ENCODE measurements at regions of chr4 and their contacts with region 1.

Region 1: GRCh38 chr4:58732973-58733372 is 1622.8 kb upstream of the IGFBP7 start:
- DNase-seq: peak; percentile 58
- ATAC-seq: peak; percentile 71
- H3K4me3 ChIP-seq: no peak overlapping the region
- H3K27ac ChIP-seq: no peak overlapping the region
- H3K4me1 ChIP-seq: no peaks in the 10 kb centered on the region
- H3K27me3 ChIP-seq: no peaks in the 10 kb centered on the region
- CTCF ChIP-seq: peak; percentile 83

Region 2: DNA sequence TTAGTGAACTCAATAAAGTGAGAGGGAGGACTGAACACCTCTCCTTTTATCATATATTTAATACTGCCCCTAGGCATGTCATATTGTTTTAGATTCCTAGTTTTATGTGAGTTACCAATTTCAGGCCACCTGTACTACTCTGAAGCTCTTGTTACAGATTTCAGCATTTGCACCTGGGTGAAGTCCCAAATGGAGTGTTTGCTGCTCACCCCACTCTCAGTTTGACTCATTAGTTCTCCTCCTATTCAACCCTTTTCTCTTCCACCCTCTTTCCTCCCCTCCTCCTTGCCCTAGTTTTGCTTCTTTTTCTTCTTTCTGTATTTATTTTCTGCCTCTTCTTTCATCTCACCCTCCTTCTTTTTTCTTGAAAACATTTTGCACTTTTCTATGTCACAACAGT is 229.5 kb after region 1 on chr4:
- CTCF ChIA-PET with region 1: no interaction called
- POLR2A ChIA-PET with region 1: no interaction called
- intact Hi-C with region 1: loop called (anchors 1 kb)
- DNase-seq: no peak
- ATAC-seq: no peak
- H3K4me3 ChIP-seq: no peak overlapping the region
- H3K27ac ChIP-seq: no peak overlapping the region
- H3K4me1 ChIP-seq: no peaks in the 10 kb centered on the region
- H3K27me3 ChIP-seq: no peaks in the 10 kb centered on the region
- CTCF ChIP-seq: no peak

Region 3: GRCh38 chr4:59057804-59058203 is 324.8 kb after region 1 on chr4:
- CTCF ChIA-PET with region 1: no interaction called
- POLR2A ChIA-PET with region 1: no interaction called
- intact Hi-C with region 1: loop called (anchors 5 kb)
- DNase-seq: peak; percentile 89
- ATAC-seq: peak; percentile 98
- H3K4me3 ChIP-seq: no peak overlapping the region
- H3K27ac ChIP-seq: no peak overlapping the region
- H3K4me1 ChIP-seq: peaks cover 16% of the 10 kb centered on the region
- H3K27me3 ChIP-seq: no peaks in the 10 kb centered on the region
- CTCF ChIP-seq: no peak

Region 4: DNA sequence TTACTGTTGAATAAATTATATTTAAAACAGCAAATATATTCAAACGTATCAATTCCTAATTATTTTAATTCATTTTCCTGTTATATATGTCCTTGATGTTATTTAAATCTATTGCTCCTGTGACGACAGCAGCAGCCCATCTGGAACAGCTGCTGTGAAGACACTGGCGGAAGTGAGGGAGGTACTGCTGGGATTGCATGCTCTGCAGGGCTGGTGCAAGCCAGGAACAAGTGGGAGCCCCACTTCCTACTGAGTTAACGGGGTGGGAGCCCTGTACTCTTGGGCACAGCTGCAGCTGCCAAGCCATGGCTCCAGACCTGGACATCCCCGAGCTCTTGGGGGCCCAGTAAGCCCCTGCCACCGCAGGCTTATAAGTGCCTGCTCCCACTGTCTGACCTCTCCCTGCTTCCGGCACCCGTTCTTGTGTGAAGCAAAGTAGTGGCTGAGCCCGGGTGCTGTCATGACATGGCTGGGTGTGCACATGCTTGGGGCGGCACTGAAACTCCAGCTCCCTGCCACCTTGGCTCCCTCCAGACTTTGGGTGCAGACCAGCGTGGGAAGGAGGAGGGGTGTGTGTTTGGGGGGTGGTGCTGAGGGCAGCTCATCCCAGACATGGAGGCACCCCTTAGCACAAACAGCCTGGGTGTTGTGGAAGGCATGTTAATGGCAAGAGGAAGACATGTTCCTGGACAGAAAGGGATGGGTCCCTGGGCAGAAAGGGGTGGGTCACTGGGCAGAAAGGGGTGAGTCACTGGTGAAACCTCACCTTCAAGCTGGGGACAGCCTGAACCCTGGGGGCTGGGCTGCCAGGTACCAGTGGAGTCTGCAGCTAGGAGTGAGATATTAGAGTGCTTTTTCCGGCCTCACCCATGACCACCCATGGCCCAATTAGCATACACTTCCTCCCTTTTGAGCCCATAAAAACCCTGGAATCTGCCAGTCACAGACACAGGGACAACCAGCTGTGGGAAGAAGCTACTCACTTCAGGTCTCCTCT is 358.5 kb after region 1 on chr4:
- CTCF ChIA-PET with region 1: no interaction called
- POLR2A ChIA-PET with region 1: no interaction called
- intact Hi-C with region 1: loop called (anchors 10 kb)
- DNase-seq: peak; percentile 21
- ATAC-seq: peak; percentile 38
- H3K4me3 ChIP-seq: no peak overlapping the region
- H3K27ac ChIP-seq: no peak overlapping the region
- H3K4me1 ChIP-seq: no peaks in the 10 kb centered on the region
- H3K27me3 ChIP-seq: no peaks in the 10 kb centered on the region
- CTCF ChIP-seq: no peak

Region 5: GRCh38 chr4:59179372-59179771 is 446.4 kb after region 1 on chr4:
- CTCF ChIA-PET with region 1: no interaction called
- POLR2A ChIA-PET with region 1: no interaction called
- intact Hi-C with region 1: loop called (anchors 5 kb)
- DNase-seq: no peak
- ATAC-seq: no peak
- H3K4me3 ChIP-seq: no peak overlapping the region
- H3K27ac ChIP-seq: no peak overlapping the region
- H3K4me1 ChIP-seq: no peaks in the 10 kb centered on the region
- H3K27me3 ChIP-seq: no peaks in the 10 kb centered on the region
- CTCF ChIP-seq: no peak

Measured in PC-3 (cell line).